ENCODE measurements at regions of chr4 and their contacts with region 1.

Region 1: DNA sequence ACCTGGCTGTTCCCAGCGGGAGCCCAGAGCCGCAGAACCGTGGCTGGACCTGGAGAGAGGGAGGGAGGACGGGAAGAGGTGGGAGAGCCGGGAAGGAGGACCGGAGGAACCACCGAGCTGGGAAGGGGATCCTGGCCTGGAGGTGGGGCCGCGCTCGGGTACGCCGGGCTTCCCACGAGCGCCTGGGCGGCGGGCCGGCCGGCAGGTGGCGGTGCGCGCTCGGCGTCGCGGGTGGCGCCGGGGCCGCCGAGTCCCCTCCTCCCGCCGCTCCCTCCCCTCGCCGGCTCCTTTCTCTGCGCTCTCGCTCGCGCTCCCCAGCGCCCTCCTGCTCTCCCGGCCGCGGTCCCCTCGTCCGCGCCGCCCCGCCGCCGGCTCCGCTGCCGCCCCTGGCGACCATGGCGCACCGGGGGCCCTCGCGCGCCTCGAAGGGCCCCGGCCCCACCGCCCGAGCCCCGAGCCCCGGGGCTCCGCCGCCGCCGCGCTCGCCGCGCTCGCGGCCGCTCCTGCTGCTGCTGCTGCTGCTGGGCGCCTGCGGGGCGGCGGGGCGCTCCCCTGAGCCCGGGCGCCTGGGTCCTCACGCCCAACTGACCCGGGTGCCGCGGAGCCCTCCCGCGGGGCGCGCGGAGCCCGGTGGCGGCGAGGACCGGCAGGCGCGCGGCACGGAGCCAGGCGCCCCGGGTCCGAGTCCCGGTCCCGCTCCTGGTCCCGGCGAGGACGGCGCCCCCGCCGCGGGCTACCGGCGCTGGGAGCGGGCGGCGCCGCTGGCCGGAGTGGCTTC is at the start of gene SORCS2:
- DNase-seq: peak; percentile 95
- H3K4me3 ChIP-seq: peak within 1 kb of the TSS; percentile 43 to 50; a peak in 3 of 4 replicates
- H3K27ac ChIP-seq: no peak within 1 kb of the TSS
- H3K4me1 ChIP-seq: peaks cover 0 to 8% of the 10 kb centered on the region in 2 experiments; a peak in 1 of 4 replicates
- H3K27me3 ChIP-seq: peaks cover 53% of the 10 kb centered on the region
- CTCF ChIP-seq: peak; percentile 54
- EP300 ChIP-seq: no peak
- RAD21 ChIP-seq: peak; percentile 74
- polyA plus RNA-seq, gene SORCS2: 0.99 and 1.6 TPM in 2 replicates

Region 2: GRCh38 chr4:6942238-6942800 is 250.1 kb before region 1 on chr4:
- CTCF ChIA-PET with region 1: no interaction called
- POLR2A ChIA-PET with region 1: no interaction called
- DNase-seq: no peak
- H3K4me3 ChIP-seq: no peak overlapping the region; a peak in 1 of 4 replicates
- H3K27ac ChIP-seq: peak overlapping the region; percentile 65 to 69
- H3K4me1 ChIP-seq: peaks cover 17 to 20% of the 10 kb centered on the region in 2 experiments
- H3K27me3 ChIP-seq: no peaks in the 10 kb centered on the region
- CTCF ChIP-seq: no peak
- EP300 ChIP-seq: no peak
- RAD21 ChIP-seq: no peak

Region 3: GRCh38 chr4:7222521-7222920 is 30.1 kb after region 1 on chr4:
- CTCF ChIA-PET with region 1: interaction called, 12 read pairs
- POLR2A ChIA-PET with region 1: no interaction called
- DNase-seq: no peak
- H3K4me3 ChIP-seq: no peak overlapping the region
- H3K27ac ChIP-seq: no peak overlapping the region
- H3K4me1 ChIP-seq: peaks cover 0 to 39% of the 10 kb centered on the region in 2 experiments; a peak in 1 of 4 replicates
- H3K27me3 ChIP-seq: no peaks in the 10 kb centered on the region; the same call in 1 of the 2 replicates
- CTCF ChIP-seq: no peak
- EP300 ChIP-seq: no peak
- RAD21 ChIP-seq: no peak

Region 4: GRCh38 chr4:7295911-7296660 is 103.6 kb after region 1 on chr4:
- CTCF ChIA-PET with region 1: interaction called, 301 read pairs
- POLR2A ChIA-PET with region 1: no interaction called
- DNase-seq: peak; percentile 82
- H3K4me3 ChIP-seq: no peak overlapping the region
- H3K27ac ChIP-seq: no peak overlapping the region
- H3K4me1 ChIP-seq: no peaks in the 10 kb centered on the region; a peak in 1 of 4 replicates
- H3K27me3 ChIP-seq: no peaks in the 10 kb centered on the region
- CTCF ChIP-seq: peak; percentile 69
- EP300 ChIP-seq: no peak
- RAD21 ChIP-seq: peak; percentile 88

Region 5: GRCh38 chr4:7381221-7381889 is 188.9 kb after region 1 on chr4:
- CTCF ChIA-PET with region 1: no interaction called
- POLR2A ChIA-PET with region 1: no interaction called
- DNase-seq: no peak
- H3K4me3 ChIP-seq: no peak overlapping the region
- H3K27ac ChIP-seq: no peak overlapping the region
- H3K4me1 ChIP-seq: peaks cover 0 to 16% of the 10 kb centered on the region in 2 experiments; a peak in 1 of 4 replicates
- H3K27me3 ChIP-seq: no peaks in the 10 kb centered on the region; the same call in 1 of the 2 replicates
- CTCF ChIP-seq: no peak
- EP300 ChIP-seq: no peak
- RAD21 ChIP-seq: no peak

Region 6: DNA sequence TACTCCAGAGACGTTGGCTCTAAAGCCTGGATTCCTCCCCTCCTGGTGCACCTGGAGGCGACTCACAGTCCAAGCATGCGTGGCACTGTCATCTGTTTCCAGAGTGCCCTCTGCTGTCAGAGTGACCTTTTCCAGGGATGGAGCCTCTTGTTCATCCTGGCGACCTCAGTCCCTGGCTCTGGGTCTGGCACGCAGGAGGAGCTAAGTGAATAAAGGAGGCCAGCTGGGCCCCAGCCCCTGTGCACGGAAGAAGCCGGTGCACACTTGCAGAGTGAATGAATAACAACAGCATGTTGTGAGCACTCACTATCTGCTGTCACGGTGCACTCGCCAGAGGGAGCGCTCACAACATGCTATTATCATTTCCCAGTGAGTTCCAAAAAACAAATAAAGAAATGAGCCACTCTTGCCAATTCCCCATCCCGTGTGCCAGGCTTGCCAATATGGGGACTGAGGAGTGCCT is 270.1 kb after region 1 on chr4:
- CTCF ChIA-PET with region 1: interaction called, 18 read pairs
- POLR2A ChIA-PET with region 1: no interaction called
- DNase-seq: peak; percentile 71
- H3K4me3 ChIP-seq: no peak overlapping the region
- H3K27ac ChIP-seq: no peak overlapping the region
- H3K4me1 ChIP-seq: peaks cover 0 to 24% of the 10 kb centered on the region in 2 experiments; a peak in 1 of 4 replicates
- H3K27me3 ChIP-seq: no peaks in the 10 kb centered on the region
- CTCF ChIP-seq: no peak
- EP300 ChIP-seq: no peak
- RAD21 ChIP-seq: peak; percentile 60

Region 7: GRCh38 chr4:7960790-7961655 is 768.6 kb after region 1 on chr4:
- CTCF ChIA-PET with region 1: no interaction called
- POLR2A ChIA-PET with region 1: no interaction called
- DNase-seq: peak; percentile 26
- H3K4me3 ChIP-seq: no peak overlapping the region; a peak in 1 of 4 replicates
- H3K27ac ChIP-seq: peak overlapping the region; percentile 51 to 92; a peak in 3 of 4 replicates
- H3K4me1 ChIP-seq: peaks cover 16 to 49% of the 10 kb centered on the region in 2 experiments; a peak in 3 of 4 replicates
- H3K27me3 ChIP-seq: no peaks in the 10 kb centered on the region
- CTCF ChIP-seq: no peak
- EP300 ChIP-seq: peak in 1 of 2 experiments; percentile 90; a peak in 3 of 4 replicates
- RAD21 ChIP-seq: no peak

Measured in SK-N-SH (cell line).